Endothelial cell of umbilical vein (primary cell): ENCODE measurements at regions of chr4 and their contacts with region 1.

Region 1: GRCh38 chr4:38914854-38915253 is 47.2 kb downstream of the FAM114A1 start:
- DNase-seq: no peak
- H3K4me3 ChIP-seq: no peak overlapping the region
- H3K27ac ChIP-seq: no peak overlapping the region
- H3K4me1 ChIP-seq: no peaks in the 10 kb centered on the region
- H3K27me3 ChIP-seq: no peaks in the 10 kb centered on the region
- CTCF ChIP-seq: no peak
- POLR2A ChIP-seq: no peak

Region 2: GRCh38 chr4:38902695-38903094 is 12.2 kb before region 1 on chr4:
- CTCF ChIA-PET with region 1: interaction called, 10 read pairs
- POLR2A ChIA-PET with region 1: no interaction called
- dilution Hi-C with region 1: no loop called
- intact Hi-C with region 1: no loop called
- DNase-seq: peak; percentile 35
- H3K4me3 ChIP-seq: no peak overlapping the region
- H3K27ac ChIP-seq: no peak overlapping the region
- H3K4me1 ChIP-seq: no peaks in the 10 kb centered on the region
- H3K27me3 ChIP-seq: no peaks in the 10 kb centered on the region
- CTCF ChIP-seq: no peak
- POLR2A ChIP-seq: no peak